Activated CD4-positive, alpha-beta memory T cell treated with anti-CD3 and anti-CD28 coated beads, Interleukin-2, amount 10 ng/mL, durations not matched to agents 7 days and 5 days (primary cell): ENCODE measurements at regions of chr19 and their contacts with region 1.

Region 1: DNA sequence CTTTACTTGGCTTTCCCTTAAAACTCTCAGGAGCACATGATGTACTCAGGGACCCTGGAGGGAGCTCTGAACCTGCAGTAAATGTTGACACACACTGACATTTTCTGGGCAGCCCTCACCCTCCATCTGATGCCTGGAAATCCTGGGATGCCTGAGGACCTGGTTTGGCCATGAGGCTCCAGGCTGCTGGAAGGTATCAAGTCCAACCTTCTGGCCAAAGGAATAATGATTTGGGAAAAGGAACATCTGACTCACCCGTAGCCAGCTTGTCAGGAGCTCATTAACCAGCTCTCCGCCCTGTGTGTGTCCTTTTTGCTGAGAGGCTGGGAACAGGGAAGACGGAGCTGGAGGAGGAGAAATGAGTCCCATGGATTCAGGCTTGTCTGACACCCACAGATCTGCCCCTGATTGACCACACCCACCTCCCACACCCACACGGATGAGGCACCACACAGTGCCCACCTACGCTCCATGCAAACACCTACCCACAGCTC is 10.3 kb downstream of the ZNF558 start:
- DNase-seq: no peak
- H3K4me3 Mint-ChIP-seq: no peak overlapping the region
- H3K27ac Mint-ChIP-seq: no peak overlapping the region
- H3K4me1 Mint-ChIP-seq: no peaks in the 10 kb centered on the region
- H3K27me3 Mint-ChIP-seq: no peaks in the 10 kb centered on the region

Region 2: GRCh38 chr19:8832132-8833021 is 10.6 kb after region 1 on chr19 and contains the starts of genes MBD3L1 and ZNF558:
- CTCF ChIA-PET with region 1: no interaction called
- POLR2A ChIA-PET with region 1: interaction called, 11 read pairs
- DNase-seq: peak; percentile 99
- H3K4me3 Mint-ChIP-seq: peak within 1 kb of the TSS; percentile 84
- H3K27ac Mint-ChIP-seq: peak within 1 kb of the TSS; percentile 96
- H3K4me1 Mint-ChIP-seq: peaks cover 27% of the 10 kb centered on the region
- H3K27me3 Mint-ChIP-seq: peaks cover 6% of the 10 kb centered on the region
- total RNA-seq, gene MBD3L1: not detected
- total RNA-seq, gene ZNF558: 25.0 to 26.1 TPM